Panc1 (cell line): ENCODE measurements at regions of chr2 and their contacts with region 1.

Region 1: GRCh38 chr2:55948176-55948921 is 24.8 kb upstream of the EFEMP1 start:
- DNase-seq: no peak
- ATAC-seq: no peak
- H3K4me3 ChIP-seq: no peak overlapping the region
- H3K27ac ChIP-seq: peak overlapping the region; percentile 13; the same call in 1 of the 2 replicates
- H3K4me1 ChIP-seq: peaks cover 5% of the 10 kb centered on the region
- H3K27me3 ChIP-seq: no peaks in the 10 kb centered on the region
- CTCF ChIP-seq: no peak

Region 2: DNA sequence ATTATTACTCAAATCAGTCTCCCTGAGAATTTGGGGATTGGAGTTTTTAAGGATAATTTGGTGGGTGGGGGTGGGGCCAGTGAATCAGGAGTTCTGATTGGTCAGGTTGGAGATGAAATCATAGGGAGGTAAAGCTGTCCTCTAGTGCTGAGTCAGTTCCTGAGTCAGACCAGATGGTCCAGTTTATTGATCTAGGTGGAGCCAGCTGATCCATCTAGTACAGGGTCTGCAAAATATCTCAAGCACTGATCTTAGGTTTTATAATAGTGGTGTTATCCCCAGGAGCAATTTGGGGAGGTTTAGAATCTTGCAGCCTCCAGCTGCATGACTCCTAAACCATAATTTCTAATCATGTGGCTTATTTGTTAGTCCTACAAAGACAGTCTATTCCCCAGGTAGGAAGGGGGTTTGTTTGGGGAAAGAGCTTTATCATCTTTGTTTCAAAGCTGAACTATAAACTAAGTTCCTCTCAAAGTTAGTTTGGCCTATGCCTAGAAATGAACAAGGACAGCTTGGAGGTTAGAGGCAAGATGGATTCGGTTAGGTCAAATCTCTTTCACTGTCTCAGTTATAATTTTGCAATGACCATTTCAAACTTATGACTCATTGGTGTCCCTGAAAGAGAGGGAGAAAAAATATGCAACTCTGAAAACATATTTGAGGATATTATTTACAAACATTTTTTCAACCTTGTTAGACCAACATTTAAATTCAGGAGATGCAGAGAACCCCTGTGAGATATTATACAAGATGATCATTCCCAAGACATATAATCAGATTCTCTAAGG is 120.7 kb before region 1 on chr2:
- CTCF ChIA-PET with region 1: no interaction called
- POLR2A ChIA-PET with region 1: no interaction called
- in situ Hi-C with region 1: no loop called
- intact Hi-C with region 1: no loop called
- DNase-seq: no peak
- ATAC-seq: no peak
- H3K4me3 ChIP-seq: no peak overlapping the region
- H3K27ac ChIP-seq: no peak overlapping the region
- H3K4me1 ChIP-seq: no peaks in the 10 kb centered on the region
- H3K27me3 ChIP-seq: no peaks in the 10 kb centered on the region
- CTCF ChIP-seq: no peak

Region 3: GRCh38 chr2:55856936-55857335 is 91.4 kb before region 1 on chr2:
- CTCF ChIA-PET with region 1: no interaction called
- POLR2A ChIA-PET with region 1: interaction called, 10 read pairs
- in situ Hi-C with region 1: no loop called
- intact Hi-C with region 1: no loop called
- DNase-seq: no peak
- ATAC-seq: peak; percentile 42; the same call in 1 of the 2 replicates
- H3K4me3 ChIP-seq: no peak overlapping the region
- H3K27ac ChIP-seq: peak overlapping the region; percentile 51; the same call in 1 of the 2 replicates
- H3K4me1 ChIP-seq: no peaks in the 10 kb centered on the region
- H3K27me3 ChIP-seq: no peaks in the 10 kb centered on the region
- CTCF ChIP-seq: no peak